PC-3 (cell line): ENCODE measurements at regions of chr16 and their contacts with region 1.

Region 1: GRCh38 chr16:352547-353403 is at the start of gene AXIN1:
- DNase-seq: peak; percentile 94
- ATAC-seq: peak; percentile 75
- H3K4me3 ChIP-seq: peak within 1 kb of the TSS; percentile 77
- H3K27ac ChIP-seq: no peak within 1 kb of the TSS
- H3K4me1 ChIP-seq: peaks cover 5% of the 10 kb centered on the region; the same call in 1 of the 2 replicates
- H3K27me3 ChIP-seq: no peaks in the 10 kb centered on the region
- CTCF ChIP-seq: no peak
- total RNA-seq, gene AXIN1: 26.9 and 50.8 TPM in 2 replicates

Region 2: GRCh38 chr16:228818-229730 is 123.7 kb before region 1 on chr16 and contains the start of gene LUC7L:
- CTCF ChIA-PET with region 1: interaction called, 14 read pairs
- POLR2A ChIA-PET with region 1: interaction called, 3 read pairs
- intact Hi-C with region 1: no loop called
- DNase-seq: peak; percentile 81
- ATAC-seq: peak; percentile 91
- H3K4me3 ChIP-seq: peak within 1 kb of the TSS; percentile 99
- H3K27ac ChIP-seq: peak within 1 kb of the TSS; percentile 59
- H3K4me1 ChIP-seq: peaks cover 25% of the 10 kb centered on the region
- H3K27me3 ChIP-seq: no peaks in the 10 kb centered on the region
- CTCF ChIP-seq: no peak
- total RNA-seq, gene LUC7L: 46.0 and 61.9 TPM in 2 replicates

Region 3: DNA sequence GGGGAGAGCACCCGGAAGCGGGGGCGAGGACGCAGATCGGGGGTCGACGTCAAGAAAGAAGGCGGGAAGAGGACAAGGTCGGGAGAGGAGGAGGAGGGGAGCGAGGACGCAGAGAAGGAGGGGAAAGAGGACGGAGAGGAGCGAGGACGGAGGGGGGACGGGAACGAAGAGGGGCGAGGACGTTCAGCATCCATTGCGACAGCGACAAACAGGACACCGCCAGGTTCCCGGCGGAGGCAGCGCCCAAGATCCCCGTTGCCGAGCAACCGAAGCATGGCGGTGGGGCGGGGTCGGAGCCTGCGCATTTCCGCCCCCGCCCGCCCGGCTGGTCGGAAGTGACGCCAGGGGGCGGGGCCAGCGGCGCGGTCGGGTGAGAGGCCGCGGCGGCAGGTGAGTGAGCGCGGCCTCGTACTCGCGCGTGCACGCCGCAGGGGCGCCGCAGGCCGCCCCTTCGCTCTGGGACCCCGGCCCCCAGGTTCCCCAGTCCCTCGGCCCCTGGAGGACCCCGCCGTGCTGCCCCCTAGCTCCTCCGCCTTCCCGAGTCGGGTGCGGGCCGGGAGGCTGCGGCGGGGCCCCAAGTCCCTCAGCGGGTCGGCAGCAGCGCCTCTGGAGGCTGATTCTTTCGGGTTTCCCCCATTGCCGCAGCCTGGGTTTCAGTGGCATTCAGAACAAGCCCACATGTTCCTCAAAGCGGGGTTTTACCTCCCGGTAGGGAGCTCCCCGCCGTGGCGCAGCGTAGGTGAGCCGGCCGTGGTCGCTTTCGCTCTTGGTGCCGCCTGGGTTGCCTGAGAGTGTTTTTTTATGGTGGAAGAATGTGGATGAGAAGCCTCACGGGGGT is 118.1 kb before region 1 on chr16 and contains the start of gene FAM234A:
- CTCF ChIA-PET with region 1: no interaction called
- POLR2A ChIA-PET with region 1: interaction called, 36 read pairs
- intact Hi-C with region 1: no loop called
- DNase-seq: peak; percentile 91
- ATAC-seq: peak; percentile 85
- H3K4me3 ChIP-seq: peak within 1 kb of the TSS; percentile 95
- H3K27ac ChIP-seq: peak within 1 kb of the TSS; percentile 89
- H3K4me1 ChIP-seq: no peaks in the 10 kb centered on the region
- H3K27me3 ChIP-seq: no peaks in the 10 kb centered on the region
- CTCF ChIP-seq: peak; percentile 35
- total RNA-seq, gene FAM234A: 31.4 and 38.0 TPM in 2 replicates

Region 4: DNA sequence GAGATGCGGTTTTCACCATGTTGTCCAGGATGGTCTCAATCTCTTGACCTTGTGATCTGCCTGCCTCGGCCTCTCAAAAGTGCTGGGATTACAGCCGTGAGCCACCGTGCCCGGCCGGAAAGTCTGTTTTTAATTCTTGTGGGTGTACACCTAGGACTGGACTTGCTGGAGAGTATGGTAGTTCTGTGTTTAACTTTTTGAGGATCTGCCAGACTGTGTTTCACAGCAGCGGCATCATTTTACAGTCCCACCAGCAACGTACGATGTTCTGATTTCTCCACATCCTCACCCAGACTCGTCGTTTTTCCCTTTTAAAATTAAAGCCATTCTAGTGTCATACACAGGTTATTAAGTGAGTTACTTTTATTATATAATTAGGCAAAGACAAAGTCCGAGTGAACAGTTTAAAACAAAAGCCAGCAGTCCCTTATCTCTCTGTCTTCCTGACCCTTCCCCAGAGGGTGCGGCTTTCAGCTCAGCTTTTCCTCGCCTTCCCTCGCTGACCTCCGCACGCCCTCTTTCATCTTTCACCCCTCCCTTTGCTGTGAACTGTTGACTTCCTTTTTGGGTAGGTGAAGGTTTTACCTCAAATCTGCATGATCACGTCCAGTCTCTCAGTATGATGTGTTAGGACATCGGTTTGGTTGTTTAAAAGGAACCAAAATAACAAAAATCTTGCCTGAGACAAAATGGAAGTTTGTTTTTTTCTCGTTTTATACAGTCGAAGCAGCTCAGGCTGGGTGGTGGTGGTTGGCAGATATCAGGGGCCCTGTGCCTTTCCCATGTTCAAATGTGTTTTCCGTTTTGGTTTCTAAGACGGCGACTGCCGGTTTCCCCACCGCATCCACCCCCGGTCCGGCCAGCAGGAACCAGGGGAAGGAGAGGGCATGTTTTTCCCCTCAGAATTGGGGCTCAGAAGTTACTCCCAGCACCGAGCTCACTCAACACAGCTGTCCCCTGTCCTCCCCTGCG is 100.1 kb before region 1 on chr16:
- CTCF ChIA-PET with region 1: no interaction called
- POLR2A ChIA-PET with region 1: no interaction called
- intact Hi-C with region 1: no loop called
- DNase-seq: no peak
- ATAC-seq: no peak
- H3K4me3 ChIP-seq: no peak overlapping the region
- H3K27ac ChIP-seq: no peak overlapping the region
- H3K4me1 ChIP-seq: peaks cover 9% of the 10 kb centered on the region; the same call in 1 of the 2 replicates
- H3K27me3 ChIP-seq: no peaks in the 10 kb centered on the region
- CTCF ChIP-seq: no peak

Region 5: GRCh38 chr16:325375-326145 is 27.2 kb before region 1 on chr16:
- CTCF ChIA-PET with region 1: no interaction called
- POLR2A ChIA-PET with region 1: interaction called, 16 read pairs
- intact Hi-C with region 1: no loop called
- DNase-seq: no peak
- ATAC-seq: no peak
- H3K4me3 ChIP-seq: no peak overlapping the region
- H3K27ac ChIP-seq: no peak overlapping the region
- H3K4me1 ChIP-seq: peaks cover 18% of the 10 kb centered on the region
- H3K27me3 ChIP-seq: no peaks in the 10 kb centered on the region
- CTCF ChIP-seq: no peak